ENCODE measurements at regions of chr1 and their contacts with region 1.

Region 1: GRCh38 chr1:18926315-18927081 is 24.1 kb upstream of the ALDH4A1 start:
- DNase-seq: peak; percentile 83 to 95
- H3K4me3 ChIP-seq: peak overlapping the region in 1 of 2 donors; percentile 30
- H3K27ac ChIP-seq: peak overlapping the region; percentile 95 to 97
- H3K4me1 ChIP-seq: peaks cover 39 to 63% of the 10 kb centered on the region in 2 donors
- H3K27me3 ChIP-seq: no peaks in the 10 kb centered on the region
- CTCF ChIP-seq: no peak

Region 2: DNA sequence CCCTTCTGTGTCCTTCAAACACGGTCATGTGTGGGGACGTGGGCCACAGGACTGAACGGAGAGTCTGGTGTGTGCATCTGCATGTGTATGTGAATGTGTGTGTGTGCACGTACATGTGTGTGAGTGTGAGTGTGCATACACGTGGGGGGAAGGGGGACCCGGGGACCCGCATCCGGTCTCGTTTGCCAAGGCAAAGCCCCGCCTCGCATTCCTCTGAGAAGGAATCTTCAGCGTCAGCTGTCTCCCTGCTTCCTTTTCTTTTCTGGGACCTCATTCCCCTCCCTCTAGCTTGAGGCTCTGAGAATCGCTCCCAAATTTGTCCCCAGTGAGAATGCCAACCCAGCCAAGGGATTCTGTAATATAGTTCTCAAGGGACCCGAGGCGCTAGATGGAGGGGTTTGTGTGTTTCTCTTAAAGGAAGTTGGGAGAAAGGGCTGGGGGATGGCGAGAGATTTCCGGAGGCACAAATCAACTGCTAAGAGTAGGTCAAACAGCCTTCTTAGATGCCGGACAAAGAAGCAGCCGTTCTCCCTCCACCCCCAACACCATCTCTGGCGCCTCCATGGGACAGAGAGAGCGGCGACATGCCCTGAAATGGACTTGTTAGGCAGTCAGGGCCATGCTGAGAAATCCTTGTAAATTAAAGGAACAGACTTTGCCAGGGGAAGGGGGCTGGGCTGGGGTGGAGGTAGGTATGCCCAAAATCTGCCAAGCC is 23.3 kb after region 1 on chr1:
- intact Hi-C with region 1: loop called (anchors 1 kb)
- DNase-seq: peak in 1 of 2 donors; percentile 83
- H3K4me3 ChIP-seq: peak overlapping the region; percentile 46 to 62
- H3K27ac ChIP-seq: peak overlapping the region; percentile 94 to 97
- H3K4me1 ChIP-seq: peaks cover 35 to 69% of the 10 kb centered on the region in 2 donors
- H3K27me3 ChIP-seq: no peaks in the 10 kb centered on the region
- CTCF ChIP-seq: peak; percentile 35 to 50 (median 45)

Region 3: DNA sequence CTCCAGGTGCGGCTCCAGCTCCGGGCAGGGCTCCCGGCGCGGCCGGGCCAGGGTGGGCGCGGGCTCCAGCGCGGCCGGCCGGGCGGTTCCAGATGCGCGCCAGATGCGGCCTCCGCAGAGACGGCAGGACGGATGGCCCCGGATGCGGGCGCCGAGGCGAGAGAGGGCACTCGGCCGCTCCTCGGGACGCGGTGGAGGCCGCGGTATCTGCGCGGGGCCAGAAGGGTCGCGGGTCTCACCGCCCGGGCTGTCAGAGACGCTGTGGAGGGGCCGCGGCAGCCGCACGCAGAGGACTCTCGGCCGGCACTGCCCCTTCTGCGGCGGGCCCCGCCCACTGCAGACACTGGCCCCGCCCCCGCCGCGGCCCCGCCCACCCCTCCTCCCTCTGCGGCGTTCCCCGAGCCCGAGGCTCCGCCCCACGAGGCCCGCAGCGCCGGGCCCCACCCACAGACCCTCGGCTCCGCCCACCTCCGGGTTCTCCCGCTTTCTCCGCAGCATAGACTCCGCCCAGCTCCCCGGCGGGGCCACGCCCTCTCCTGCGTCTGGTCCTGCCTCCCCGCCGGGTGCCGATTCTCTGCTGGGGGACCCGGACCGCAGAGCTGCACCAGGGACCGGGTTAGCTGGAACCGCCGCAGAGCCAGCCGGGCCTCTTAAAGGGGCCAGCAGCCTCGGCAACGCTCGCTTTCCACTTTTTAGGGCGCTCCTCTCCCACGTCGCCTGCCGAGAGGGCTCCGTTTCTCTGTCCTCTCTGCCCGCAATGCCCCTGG is 30.1 kb after region 1 on chr1 and contains the start of gene IFFO2:
- intact Hi-C with region 1: loop called (anchors 1 kb)
- DNase-seq: peak; percentile 83 to 99
- H3K4me3 ChIP-seq: peak within 1 kb of the TSS; percentile 94 to 98
- H3K27ac ChIP-seq: peak within 1 kb of the TSS; percentile 94 to 97
- H3K4me1 ChIP-seq: peaks cover 3 to 24% of the 10 kb centered on the region in 2 donors
- H3K27me3 ChIP-seq: no peaks in the 10 kb centered on the region
- CTCF ChIP-seq: peak in 1 of 3 experiments; percentile 10
- total RNA-seq, gene IFFO2: 131 TPM

Region 4: DNA sequence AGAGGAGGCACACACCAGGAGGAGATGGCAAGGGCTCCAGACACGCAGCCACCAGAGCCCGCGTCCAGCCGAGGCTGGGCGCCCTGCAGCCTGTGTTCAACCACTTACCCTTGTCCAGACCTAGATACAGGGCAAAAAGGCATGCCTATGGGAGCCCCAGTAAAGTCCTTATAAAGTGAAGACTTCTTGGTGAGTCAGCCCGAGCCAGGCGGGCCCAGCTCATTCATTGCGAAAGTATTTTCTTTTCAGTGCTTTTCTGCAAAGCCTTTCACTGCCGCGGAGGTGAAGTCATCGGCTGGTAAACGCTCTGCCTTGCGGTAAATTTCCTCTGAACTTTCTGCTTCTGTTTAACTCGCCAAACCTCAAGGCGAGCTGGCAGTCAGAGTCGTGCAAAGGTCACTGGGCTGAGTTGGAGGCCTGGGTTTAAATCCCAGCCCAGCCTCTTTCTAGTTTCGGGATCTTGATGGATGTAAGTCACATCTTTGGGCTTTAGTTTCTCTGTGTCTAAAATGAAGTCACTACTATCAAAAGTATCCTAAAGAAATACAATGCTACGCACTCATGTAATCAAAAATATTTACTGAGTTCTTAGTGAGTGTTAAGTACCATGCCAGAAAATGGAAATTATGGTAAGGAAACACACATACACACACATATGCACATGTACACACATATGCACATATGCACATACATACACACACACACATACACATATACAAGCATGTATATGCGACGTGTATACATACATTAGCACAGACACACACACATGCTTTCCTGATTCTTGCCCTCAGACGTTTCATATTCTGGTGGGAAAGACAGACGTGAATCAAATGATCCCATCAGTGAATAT is 84.7 kb after region 1 on chr1:
- intact Hi-C with region 1: loop called (anchors 2 kb)
- DNase-seq: peak; percentile 63 to 95
- H3K4me3 ChIP-seq: peak overlapping the region in 1 of 2 donors; percentile 6
- H3K27ac ChIP-seq: peak overlapping the region; percentile 85 to 92
- H3K4me1 ChIP-seq: peaks cover 17 to 24% of the 10 kb centered on the region in 2 donors
- H3K27me3 ChIP-seq: no peaks in the 10 kb centered on the region
- CTCF ChIP-seq: no peak

Region 5: GRCh38 chr1:19074902-19075721 is 148.6 kb after region 1 on chr1:
- intact Hi-C with region 1: loop called (anchors 5 kb)
- DNase-seq: no peak
- H3K4me3 ChIP-seq: no peak overlapping the region
- H3K27ac ChIP-seq: peak overlapping the region in 1 of 2 donors; percentile 28
- H3K4me1 ChIP-seq: peaks cover 4 to 11% of the 10 kb centered on the region in 2 donors
- H3K27me3 ChIP-seq: no peaks in the 10 kb centered on the region
- CTCF ChIP-seq: no peak

Region 6: DNA sequence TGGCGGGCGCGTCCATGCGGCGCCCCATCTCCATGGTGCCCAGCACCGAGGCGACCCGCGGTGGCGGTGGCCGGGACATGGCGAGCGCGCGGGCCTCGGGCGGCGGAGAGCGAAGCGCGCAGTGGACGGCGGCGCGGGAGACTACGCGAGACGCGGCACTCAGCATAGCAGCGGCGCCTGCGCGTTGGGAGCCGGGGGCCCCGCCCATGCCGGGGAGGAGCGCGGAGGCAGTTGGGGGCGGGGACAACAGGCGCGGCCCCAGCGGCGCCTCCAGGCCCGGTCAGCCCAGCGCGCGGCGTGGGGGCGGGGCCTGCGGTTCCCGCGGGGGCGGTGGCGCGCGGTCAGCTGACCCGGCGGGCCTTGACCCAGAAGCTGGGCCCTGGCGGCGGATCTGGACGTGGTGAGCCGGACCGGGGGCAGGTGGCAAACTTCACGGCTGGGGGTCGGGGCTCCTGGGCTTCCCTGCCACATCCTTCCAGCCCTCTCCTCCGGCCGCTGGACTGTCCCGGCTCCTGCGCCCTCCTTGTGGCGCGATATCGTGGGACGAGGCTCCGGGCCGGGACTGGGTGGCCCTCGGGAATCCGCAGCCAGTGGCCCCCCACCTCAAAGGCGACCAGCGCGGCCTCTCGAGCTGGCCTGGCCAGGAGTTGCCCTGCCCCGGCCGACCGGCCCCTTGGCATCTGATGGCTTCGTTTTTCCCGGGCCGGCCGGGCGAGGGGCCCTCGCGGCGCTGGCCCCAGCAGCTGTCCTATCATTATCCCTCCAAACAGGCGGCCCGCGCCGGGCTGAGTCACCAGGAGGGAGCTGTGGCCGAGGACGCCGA is 385.7 kb after region 1 on chr1 and contains the starts of genes AKR7A2 and SLC66A1:
- intact Hi-C with region 1: loop called (anchors 10 kb)
- DNase-seq: peak; percentile 78 to 96
- H3K4me3 ChIP-seq: peak within 1 kb of the TSS; percentile 71 to 96
- H3K27ac ChIP-seq: peak within 1 kb of the TSS; percentile 83 to 93
- H3K4me1 ChIP-seq: peaks cover 0 to 13% of the 10 kb centered on the region in 2 donors
- H3K27me3 ChIP-seq: no peaks in the 10 kb centered on the region
- CTCF ChIP-seq: no peak
- total RNA-seq, gene AKR7A2: 53.7 TPM
- total RNA-seq, gene SLC66A1: 11.1 TPM

Measured in ascending aorta (tissue), 2 donors.